Activated CD4-positive, alpha-beta T cell treated with anti-CD3 and anti-CD28 coated beads, Interleukin-2, amount 10 ng/mL, durations not matched to agents 24 days and 14 days (primary cell): ENCODE measurements at regions of chr12 and their contacts with region 1.

Region 1: GRCh38 chr12:68259318-68259940 is 6.0 kb upstream of the IL22 start:
- DNase-seq: peak; percentile 73
- H3K4me3 Mint-ChIP-seq: peak overlapping the region; percentile 11
- H3K27ac Mint-ChIP-seq: peak overlapping the region; percentile 71
- H3K4me1 Mint-ChIP-seq: peaks cover 44% of the 10 kb centered on the region
- H3K27me3 Mint-ChIP-seq: peaks cover 18% of the 10 kb centered on the region

Region 2: GRCh38 chr12:68175557-68176061 is 83.8 kb before region 1 on chr12:
- intact Hi-C with region 1: loop called (anchors 1 kb)
- DNase-seq: peak; percentile 92
- H3K4me3 Mint-ChIP-seq: peak overlapping the region; percentile 68
- H3K27ac Mint-ChIP-seq: peak overlapping the region; percentile 85
- H3K4me1 Mint-ChIP-seq: peaks cover 53% of the 10 kb centered on the region
- H3K27me3 Mint-ChIP-seq: no peaks in the 10 kb centered on the region

Region 3: DNA sequence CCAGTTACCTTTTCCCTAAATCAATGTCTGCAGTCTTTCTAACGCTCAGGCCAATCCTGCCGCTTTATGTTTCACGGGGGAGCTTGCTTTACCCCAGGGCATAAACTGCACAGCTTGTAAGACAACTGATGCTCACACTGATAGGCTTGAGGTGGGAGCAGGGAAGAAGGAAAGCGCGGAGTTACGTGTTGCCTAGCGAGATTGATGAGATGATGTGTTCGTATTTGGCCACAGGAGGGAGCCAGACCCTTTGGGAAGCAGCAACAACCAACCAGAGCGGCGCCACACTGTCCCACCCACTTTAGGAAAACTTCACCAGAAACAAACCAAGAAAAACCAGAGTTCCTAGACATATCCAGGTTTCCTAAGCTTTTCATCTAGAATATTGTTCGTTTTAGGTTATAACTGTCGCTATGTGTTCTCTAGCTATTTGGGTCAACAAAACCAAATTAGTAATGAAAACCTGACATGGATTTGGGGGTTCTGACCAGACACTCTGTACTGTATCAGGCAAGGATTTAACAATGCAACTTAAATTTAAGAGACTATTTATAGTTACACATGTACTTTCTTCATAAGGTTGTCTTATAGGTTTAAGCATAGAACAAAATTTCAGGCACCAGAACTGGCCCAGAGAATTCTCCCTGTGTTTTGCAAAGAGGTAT is 36.2 kb before region 1 on chr12:
- intact Hi-C with region 1: loop called (anchors 2 kb)
- DNase-seq: peak; percentile 91
- H3K4me3 Mint-ChIP-seq: peak overlapping the region; percentile 75
- H3K27ac Mint-ChIP-seq: peak overlapping the region; percentile 81
- H3K4me1 Mint-ChIP-seq: peaks cover 17% of the 10 kb centered on the region
- H3K27me3 Mint-ChIP-seq: peaks cover 14% of the 10 kb centered on the region

Region 4: GRCh38 chr12:68240597-68241374 is 18.6 kb before region 1 on chr12:
- intact Hi-C with region 1: loop called (anchors 1 kb)
- DNase-seq: peak; percentile 89
- H3K4me3 Mint-ChIP-seq: peak overlapping the region; percentile 70
- H3K27ac Mint-ChIP-seq: peak overlapping the region; percentile 88
- H3K4me1 Mint-ChIP-seq: peaks cover 54% of the 10 kb centered on the region
- H3K27me3 Mint-ChIP-seq: peaks cover 3% of the 10 kb centered on the region

Region 5: GRCh38 chr12:68290126-68290525 is 30.7 kb after region 1 on chr12:
- intact Hi-C with region 1: loop called (anchors 1 kb)
- DNase-seq: peak; percentile 80
- H3K4me3 Mint-ChIP-seq: peak overlapping the region; percentile 19
- H3K27ac Mint-ChIP-seq: peak overlapping the region; percentile 55
- H3K4me1 Mint-ChIP-seq: peaks cover 43% of the 10 kb centered on the region
- H3K27me3 Mint-ChIP-seq: peaks cover 5% of the 10 kb centered on the region